Colonic mucosa (tissue), 4 donors: ENCODE measurements at regions of chr18 and their contacts with region 1.

Region 1: DNA sequence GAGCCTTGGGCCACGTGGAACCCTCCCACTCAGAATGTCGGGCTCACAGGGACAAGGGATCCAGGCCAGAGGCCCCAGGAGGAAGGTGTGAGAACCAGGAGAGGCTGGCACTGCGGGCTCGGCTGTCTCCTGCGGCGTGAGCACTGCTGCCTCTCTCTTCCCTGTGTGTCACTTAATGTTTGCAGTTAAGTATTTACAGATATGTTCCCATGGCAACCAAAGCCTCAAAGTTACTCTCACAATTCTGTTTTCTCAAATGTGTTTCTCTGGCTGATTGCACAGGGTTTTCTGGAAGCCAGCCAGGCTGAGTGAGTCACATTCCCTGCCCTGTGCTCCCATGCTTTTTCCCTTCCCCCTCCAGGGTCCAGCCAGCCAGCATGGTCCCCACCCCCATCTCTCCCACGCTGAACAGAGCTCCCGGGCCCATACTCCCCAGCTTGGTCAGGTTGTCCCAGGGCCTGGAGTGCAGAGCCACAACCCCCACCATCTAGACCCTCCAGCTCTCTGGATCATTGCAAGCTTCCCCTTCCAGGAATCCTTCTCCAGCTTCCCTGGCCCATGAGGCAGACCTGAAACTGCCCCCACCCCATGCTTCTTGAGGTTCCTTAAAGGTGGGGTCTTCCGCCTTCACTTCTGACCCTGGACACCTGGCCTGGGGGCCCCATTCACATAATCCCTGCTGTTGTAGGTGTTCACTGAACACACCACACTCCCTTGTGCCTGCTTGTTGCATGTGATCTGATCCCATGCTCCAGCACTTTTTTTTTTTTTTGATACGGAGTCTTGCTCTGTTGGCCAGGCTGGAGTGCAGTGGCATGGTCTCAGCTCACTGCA is 265.9 kb downstream of the CELF4 start:
- DNase-seq: peak; percentile 81
- H3K4me3 ChIP-seq: no peak overlapping the region
- H3K27ac ChIP-seq: no peak overlapping the region
- H3K4me1 ChIP-seq: peaks cover 6% of the 10 kb centered on the region
- H3K27me3 ChIP-seq: no peaks in the 10 kb centered on the region
- CTCF ChIP-seq: no peak

Region 2: GRCh38 chr18:37364237-37364636 is 64.5 kb after region 1 on chr18:
- intact Hi-C with region 1: loop called (anchors 10 kb)
- DNase-seq: no peak
- H3K4me3 ChIP-seq: no peak overlapping the region
- H3K27ac ChIP-seq: no peak overlapping the region
- H3K4me1 ChIP-seq: no peaks in the 10 kb centered on the region
- H3K27me3 ChIP-seq: no peaks in the 10 kb centered on the region
- CTCF ChIP-seq: no peak